ENCODE measurements at regions of chr5 and their contacts with region 1.

Region 1: GRCh38 chr5:22855832-22856231 is 2.7 kb upstream of the CDH12 start:
- DNase-seq: no peak
- ATAC-seq: no peak
- H3K4me3 ChIP-seq: no peak overlapping the region
- H3K27ac ChIP-seq: no peak overlapping the region
- H3K4me1 ChIP-seq: no peaks in the 10 kb centered on the region
- H3K27me3 ChIP-seq: no peaks in the 10 kb centered on the region; a peak in 1 of 5 replicates
- CTCF ChIP-seq: no peak
- EP300 ChIP-seq: no peak
- POLR2A ChIP-seq: no peak
- RAD21 ChIP-seq: no peak

Region 2: GRCh38 chr5:21219966-21220365 is 1635.9 kb before region 1 on chr5:
- CTCF ChIA-PET with region 1: no interaction called
- POLR2A ChIA-PET with region 1: no interaction called
- in situ Hi-C with region 1: no loop called
- intact Hi-C with region 1: loop called (anchors 5 kb)
- DNase-seq: no peak
- ATAC-seq: no peak
- H3K4me3 ChIP-seq: no peak overlapping the region
- H3K27ac ChIP-seq: no peak overlapping the region
- H3K4me1 ChIP-seq: no peaks in the 10 kb centered on the region
- H3K27me3 ChIP-seq: no peaks in the 10 kb centered on the region
- CTCF ChIP-seq: no peak
- EP300 ChIP-seq: no peak
- POLR2A ChIP-seq: no peak
- RAD21 ChIP-seq: no peak

Measured in HepG2 (cell line).